Transverse colon (tissue), 4 donors: ENCODE measurements at regions of chrX and their contacts with region 1.

Region 1: DNA sequence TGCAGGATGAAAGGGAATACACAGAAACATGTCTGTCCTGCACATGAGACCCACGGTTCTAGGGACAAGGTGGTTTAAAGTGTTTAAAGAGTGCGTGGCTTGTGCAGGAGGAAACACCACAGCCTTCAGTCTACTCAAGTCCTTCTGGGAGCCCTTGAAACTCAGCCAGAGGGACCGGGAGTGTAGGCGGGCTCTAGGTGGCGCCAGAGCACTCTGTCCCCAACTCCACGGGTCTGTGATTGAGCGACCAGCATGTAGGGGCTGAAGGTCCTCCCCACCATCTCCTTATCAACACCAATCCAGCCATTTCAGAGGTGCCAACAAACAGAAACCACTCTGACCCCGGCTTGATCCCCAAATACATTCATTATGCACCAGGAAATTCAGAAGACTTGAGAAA is 82.0 kb upstream of the CLDN34 start:
- DNase-seq: peak; percentile 64
- H3K4me3 ChIP-seq: no peak overlapping the region
- H3K27ac ChIP-seq: no peak overlapping the region
- H3K4me1 ChIP-seq: no peaks in the 10 kb centered on the region
- H3K27me3 ChIP-seq: no peaks in the 10 kb centered on the region
- CTCF ChIP-seq: peak; percentile 21 to 46 (median 40)
- EP300 ChIP-seq: no peak
- POLR2A ChIP-seq: no peak

Region 2: DNA sequence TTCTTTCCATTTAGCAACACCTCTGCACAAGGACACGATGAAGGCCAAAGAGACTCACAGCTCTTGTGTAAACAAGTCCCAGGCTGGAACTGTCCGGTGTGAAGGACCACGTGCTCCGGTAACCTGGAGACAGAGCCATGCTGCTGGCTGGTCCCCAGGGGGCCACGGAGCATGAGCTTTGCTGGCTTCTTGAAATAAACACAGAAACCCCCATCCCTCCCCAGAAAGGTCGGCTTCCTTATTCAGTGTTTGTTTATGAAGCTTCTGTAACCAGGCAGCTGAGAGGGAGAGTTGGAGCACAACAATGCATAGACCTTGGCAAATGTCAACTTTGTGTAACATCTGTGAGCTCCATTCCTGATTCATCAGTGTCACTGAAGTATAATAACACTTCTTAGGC is 228.9 kb before region 1 on chrX:
- in situ Hi-C with region 1: no loop called
- intact Hi-C with region 1: no loop called
- DNase-seq: no peak
- H3K4me3 ChIP-seq: no peak overlapping the region
- H3K27ac ChIP-seq: no peak overlapping the region
- H3K4me1 ChIP-seq: peaks cover 0 to 2% (median 0%) of the 10 kb centered on the region in 4 donors
- H3K27me3 ChIP-seq: no peaks in the 10 kb centered on the region
- CTCF ChIP-seq: no peak
- EP300 ChIP-seq: no peak
- POLR2A ChIP-seq: no peak

Region 3: DNA sequence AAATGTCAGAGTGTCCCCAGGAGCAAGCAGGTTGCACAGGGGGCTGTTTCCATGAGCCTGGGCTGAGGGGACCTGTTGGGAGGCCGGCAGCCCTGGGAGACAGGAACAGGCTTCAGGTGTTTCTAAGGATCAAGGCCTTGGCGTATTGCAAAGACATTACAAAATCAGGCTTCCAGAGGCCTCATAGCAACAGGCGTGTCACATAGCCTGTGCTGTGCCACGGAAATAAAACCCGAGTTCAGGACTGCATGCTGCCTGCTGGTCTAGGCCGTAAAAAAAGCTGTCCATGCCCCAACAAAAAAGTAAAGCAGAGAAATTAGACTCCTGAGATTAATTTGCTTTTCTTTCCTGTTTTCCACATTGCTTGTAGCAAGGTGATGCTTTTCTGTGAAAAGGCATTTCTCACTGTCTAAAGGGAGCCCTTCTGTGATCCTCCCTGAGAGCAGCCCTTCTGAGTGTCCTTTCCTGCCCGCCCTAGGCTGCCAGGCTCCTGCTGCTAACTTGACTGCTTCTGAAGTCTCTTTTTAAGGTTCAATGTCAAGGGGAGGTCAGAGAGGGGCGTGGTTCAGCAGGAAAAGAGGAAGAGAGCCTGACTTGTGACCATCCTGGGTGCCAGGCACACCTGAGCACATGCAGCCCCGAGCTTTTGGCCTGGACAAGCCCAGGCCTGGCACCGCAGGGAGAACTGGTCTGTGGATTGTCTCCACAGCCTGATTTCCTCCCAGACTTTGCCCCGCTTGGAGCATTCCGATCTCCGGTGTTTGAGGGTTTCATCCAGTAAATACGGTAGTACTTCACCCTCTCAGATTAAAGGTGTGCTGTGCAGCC is 77.6 kb before region 1 on chrX:
- in situ Hi-C with region 1: no loop called
- intact Hi-C with region 1: no loop called
- DNase-seq: peak; percentile 26
- H3K4me3 ChIP-seq: no peak overlapping the region
- H3K27ac ChIP-seq: peak overlapping the region in 3 of 4 donors; percentile 22 to 47 (median 37)
- H3K4me1 ChIP-seq: no peaks in the 10 kb centered on the region
- H3K27me3 ChIP-seq: no peaks in the 10 kb centered on the region
- CTCF ChIP-seq: no peak
- EP300 ChIP-seq: no peak
- POLR2A ChIP-seq: no peak

Region 4: GRCh38 chrX:9995855-9996339 is 110.7 kb after region 1 on chrX:
- in situ Hi-C with region 1: loop called in 1 of 4 experiments (anchors 25 kb)
- intact Hi-C with region 1: no loop called
- DNase-seq: peak; percentile 85
- H3K4me3 ChIP-seq: no peak overlapping the region
- H3K27ac ChIP-seq: no peak overlapping the region
- H3K4me1 ChIP-seq: no peaks in the 10 kb centered on the region
- H3K27me3 ChIP-seq: no peaks in the 10 kb centered on the region
- CTCF ChIP-seq: peak; percentile 85 to 99 (median 96)
- EP300 ChIP-seq: no peak
- POLR2A ChIP-seq: no peak

Region 5: GRCh38 chrX:10119399-10119990 is 234.3 kb after region 1 on chrX:
- in situ Hi-C with region 1: loop called in 2 of 4 experiments (anchors 25 kb)
- intact Hi-C with region 1: no loop called
- DNase-seq: peak; percentile 80
- H3K4me3 ChIP-seq: no peak overlapping the region
- H3K27ac ChIP-seq: peak overlapping the region in 3 of 4 donors; percentile 29 to 42 (median 36)
- H3K4me1 ChIP-seq: no peaks in the 10 kb centered on the region
- H3K27me3 ChIP-seq: no peaks in the 10 kb centered on the region
- CTCF ChIP-seq: peak; percentile 97 to 100 (median 100)
- EP300 ChIP-seq: no peak
- POLR2A ChIP-seq: no peak